ENCODE measurements at regions of chr12 and their contacts with region 1.

Region 1: GRCh38 chr12:10235761-10236631 is 23.3 kb downstream of the GABARAPL1 start:
- DNase-seq: no peak
- ATAC-seq: peak; percentile 58
- H3K4me3 Mint-ChIP-seq: no peak overlapping the region
- H3K27ac Mint-ChIP-seq: no peak overlapping the region
- H3K4me1 Mint-ChIP-seq: no peaks in the 10 kb centered on the region
- H3K27me3 Mint-ChIP-seq: peaks cover 2% of the 10 kb centered on the region
- CTCF ChIP-seq: peak; percentile 59

Region 2: GRCh38 chr12:9925708-9926393 is 310.1 kb before region 1 on chr12:
- CTCF ChIA-PET with region 1: no interaction called
- POLR2A ChIA-PET with region 1: no interaction called
- intact Hi-C with region 1: no loop called
- DNase-seq: no peak
- ATAC-seq: peak; percentile 40
- H3K4me3 Mint-ChIP-seq: peak overlapping the region; percentile 62
- H3K27ac Mint-ChIP-seq: no peak overlapping the region
- H3K4me1 Mint-ChIP-seq: peaks cover 4% of the 10 kb centered on the region
- H3K27me3 Mint-ChIP-seq: peaks cover 12% of the 10 kb centered on the region
- CTCF ChIP-seq: no peak

Region 3: GRCh38 chr12:10101042-10101579 is 134.9 kb before region 1 on chr12:
- CTCF ChIA-PET with region 1: no interaction called
- POLR2A ChIA-PET with region 1: no interaction called
- intact Hi-C with region 1: no loop called
- DNase-seq: no peak
- ATAC-seq: no peak
- H3K4me3 Mint-ChIP-seq: no peak overlapping the region
- H3K27ac Mint-ChIP-seq: no peak overlapping the region
- H3K4me1 Mint-ChIP-seq: no peaks in the 10 kb centered on the region
- H3K27me3 Mint-ChIP-seq: peaks cover 36% of the 10 kb centered on the region
- CTCF ChIP-seq: no peak

Region 4: GRCh38 chr12:10562306-10562933 is 326.4 kb after region 1 on chr12:
- CTCF ChIA-PET with region 1: interaction called, 58 read pairs
- POLR2A ChIA-PET with region 1: no interaction called
- intact Hi-C with region 1: loop called (anchors 1 kb)
- DNase-seq: no peak
- ATAC-seq: no peak
- H3K4me3 Mint-ChIP-seq: no peak overlapping the region
- H3K27ac Mint-ChIP-seq: no peak overlapping the region
- H3K4me1 Mint-ChIP-seq: no peaks in the 10 kb centered on the region
- H3K27me3 Mint-ChIP-seq: peaks cover 11% of the 10 kb centered on the region
- CTCF ChIP-seq: peak; percentile 87

Region 5: DNA sequence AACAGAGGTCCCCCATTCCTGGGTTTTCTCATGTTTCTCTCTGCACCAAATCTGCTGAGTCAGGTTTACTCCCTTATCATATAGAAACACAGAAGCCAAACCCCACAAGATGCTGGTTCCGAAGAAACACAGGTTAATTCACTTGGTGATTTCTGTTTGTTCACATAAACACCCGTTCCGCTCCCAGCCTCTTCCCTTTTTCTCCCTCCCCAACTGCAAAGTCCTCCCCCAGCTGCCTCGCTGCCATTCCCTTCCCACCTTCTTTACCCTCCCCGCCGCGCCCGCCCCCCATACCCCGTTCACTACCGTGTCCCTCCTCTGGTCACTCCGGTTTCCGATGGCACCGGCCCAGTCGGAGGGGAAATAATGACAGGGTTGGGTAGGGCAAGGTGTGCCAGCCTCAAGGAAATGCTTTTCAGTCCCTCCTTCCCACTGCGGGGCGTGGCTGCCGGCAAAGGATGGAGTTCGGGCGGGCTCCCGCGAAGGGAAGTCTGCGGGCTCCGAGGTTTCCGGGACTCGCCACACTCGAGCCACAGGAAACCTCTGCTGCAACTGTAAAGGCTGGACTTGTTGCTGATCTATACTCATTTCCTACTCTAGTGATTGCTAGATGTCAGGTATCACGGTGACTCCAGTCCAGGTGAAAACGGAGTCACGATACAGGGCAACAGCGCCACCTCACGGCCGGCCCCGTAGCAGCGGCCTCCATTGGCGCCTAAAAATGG is 437.8 kb after region 1 on chr12 and contains the start of gene STYK1:
- CTCF ChIA-PET with region 1: no interaction called
- POLR2A ChIA-PET with region 1: no interaction called
- intact Hi-C with region 1: loop called (anchors 2 kb)
- DNase-seq: peak; percentile 22
- ATAC-seq: peak; percentile 37
- H3K4me3 Mint-ChIP-seq: peak within 1 kb of the TSS; percentile 75
- H3K27ac Mint-ChIP-seq: no peak within 1 kb of the TSS
- H3K4me1 Mint-ChIP-seq: peaks cover 27% of the 10 kb centered on the region
- H3K27me3 Mint-ChIP-seq: peaks cover 32% of the 10 kb centered on the region
- CTCF ChIP-seq: no peak
- total RNA-seq, gene STYK1: not detected in 2 replicates

Region 6: GRCh38 chr12:10749700-10750384 is 513.8 kb after region 1 on chr12:
- CTCF ChIA-PET with region 1: interaction called, 5 read pairs
- POLR2A ChIA-PET with region 1: no interaction called
- intact Hi-C with region 1: loop called (anchors 1 kb)
- DNase-seq: no peak
- ATAC-seq: peak; percentile 99
- H3K4me3 Mint-ChIP-seq: peak overlapping the region; percentile 70
- H3K27ac Mint-ChIP-seq: no peak overlapping the region
- H3K4me1 Mint-ChIP-seq: peaks cover 8% of the 10 kb centered on the region
- H3K27me3 Mint-ChIP-seq: peaks cover 18% of the 10 kb centered on the region
- CTCF ChIP-seq: no peak